ENCODE measurements at regions of chr2 and their contacts with region 1.

Region 1: DNA sequence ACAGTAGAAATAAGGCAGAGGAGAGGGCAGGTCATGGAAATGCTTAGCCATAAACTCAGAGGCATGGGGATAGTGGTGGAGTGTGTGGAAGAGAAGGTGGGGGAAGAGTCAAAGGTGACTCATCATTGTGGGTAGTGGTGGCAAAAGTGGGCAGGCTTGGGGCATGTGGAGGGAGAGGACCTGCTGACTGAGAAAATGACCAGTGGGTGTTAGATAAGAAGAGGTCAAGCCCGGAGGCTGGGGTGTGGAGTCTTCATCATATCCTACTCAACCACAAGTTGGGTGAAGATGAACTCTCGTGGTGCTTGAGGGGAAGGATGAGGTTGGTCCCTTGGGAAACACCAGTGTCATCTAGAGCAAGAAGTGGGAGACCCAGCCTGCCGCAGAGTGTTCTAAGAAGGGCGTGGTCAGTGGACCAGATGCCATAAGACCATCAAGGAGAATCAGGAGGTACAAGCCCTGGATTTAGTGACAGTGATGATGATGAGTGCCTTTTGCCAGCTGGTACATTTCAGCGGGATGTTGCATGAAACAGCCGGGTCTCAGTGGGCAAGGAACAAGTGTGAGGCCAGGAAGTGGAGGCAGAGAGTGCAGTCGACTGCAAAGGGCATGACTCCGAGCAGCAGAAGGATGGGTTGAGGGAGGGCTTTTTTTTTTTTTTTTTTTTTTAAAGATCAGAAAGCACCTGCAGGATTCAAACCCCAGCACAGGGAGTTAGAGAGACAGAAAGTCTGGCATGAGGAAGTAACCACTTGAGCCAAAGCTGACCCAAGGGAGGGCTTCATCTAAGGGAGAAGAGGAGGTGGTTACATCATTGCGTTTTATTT is 122.6 kb upstream of the SPRED2 start:
- DNase-seq: no peak
- H3K4me3 ChIP-seq: no peak overlapping the region
- H3K27ac ChIP-seq: no peak overlapping the region
- H3K4me1 ChIP-seq: no peaks in the 10 kb centered on the region
- H3K27me3 ChIP-seq: no peaks in the 10 kb centered on the region
- CTCF ChIP-seq: no peak
- POLR2A ChIP-seq: no peak

Region 2: DNA sequence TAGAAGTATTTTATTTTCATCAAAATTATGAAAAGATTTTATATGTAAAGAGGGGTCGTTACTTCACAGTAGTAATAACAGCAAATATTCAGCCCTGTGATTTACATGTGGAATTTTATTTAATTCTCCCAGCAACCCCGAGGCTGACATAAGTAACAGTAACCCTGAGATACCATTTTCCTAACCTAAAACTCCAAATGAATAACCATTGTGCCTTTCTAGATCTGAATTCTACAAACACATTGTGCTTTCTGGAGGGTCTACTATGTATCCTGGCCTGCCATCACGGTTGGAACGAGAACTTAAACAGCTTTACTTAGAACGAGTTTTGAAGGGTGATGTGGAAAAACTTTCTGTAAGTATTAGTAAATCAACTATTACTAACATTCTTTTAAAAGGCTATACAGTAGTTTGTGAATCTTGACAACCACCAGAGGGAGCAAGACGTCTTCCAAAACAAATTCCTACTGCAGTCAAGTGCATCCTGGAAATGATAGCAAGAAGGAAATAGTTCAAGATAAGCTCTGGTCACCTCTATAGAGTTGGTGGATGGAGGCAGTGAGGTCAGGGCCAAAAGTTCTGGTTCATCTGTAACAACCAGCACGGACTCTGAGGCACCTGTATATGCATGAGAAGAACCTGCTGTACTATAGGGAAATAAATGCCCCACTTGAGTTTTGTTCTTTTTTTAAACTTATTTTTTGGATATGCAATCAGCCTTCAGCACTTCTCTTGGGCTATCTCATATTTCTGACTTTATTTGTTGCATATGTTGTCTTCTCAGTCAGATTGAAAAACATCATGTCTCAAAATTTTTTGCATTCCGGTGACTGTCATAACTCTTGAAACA is 289.9 kb before region 1 on chr2:
- intact Hi-C with region 1: loop called (anchors 5 kb)
- DNase-seq: no peak
- H3K4me3 ChIP-seq: no peak overlapping the region
- H3K27ac ChIP-seq: no peak overlapping the region
- H3K4me1 ChIP-seq: peaks cover 7% of the 10 kb centered on the region
- H3K27me3 ChIP-seq: no peaks in the 10 kb centered on the region
- CTCF ChIP-seq: peak; percentile 60 to 75 (median 67)
- POLR2A ChIP-seq: no peak

Region 3: GRCh38 chr2:65647249-65647842 is 92.4 kb after region 1 on chr2:
- intact Hi-C with region 1: no loop called
- DNase-seq: peak in 1 of 2 donors; percentile 3
- H3K4me3 ChIP-seq: no peak overlapping the region
- H3K27ac ChIP-seq: no peak overlapping the region
- H3K4me1 ChIP-seq: no peaks in the 10 kb centered on the region
- H3K27me3 ChIP-seq: no peaks in the 10 kb centered on the region
- CTCF ChIP-seq: no peak
- POLR2A ChIP-seq: no peak